Activated CD4-positive, alpha-beta memory T cell treated with anti-CD3 and anti-CD28 coated beads, Interleukin-2, amount 10 ng/mL, durations not matched to agents 7 days and 5 days (primary cell): ENCODE measurements at regions of chr1 and their contacts with region 1.

Region 1: DNA sequence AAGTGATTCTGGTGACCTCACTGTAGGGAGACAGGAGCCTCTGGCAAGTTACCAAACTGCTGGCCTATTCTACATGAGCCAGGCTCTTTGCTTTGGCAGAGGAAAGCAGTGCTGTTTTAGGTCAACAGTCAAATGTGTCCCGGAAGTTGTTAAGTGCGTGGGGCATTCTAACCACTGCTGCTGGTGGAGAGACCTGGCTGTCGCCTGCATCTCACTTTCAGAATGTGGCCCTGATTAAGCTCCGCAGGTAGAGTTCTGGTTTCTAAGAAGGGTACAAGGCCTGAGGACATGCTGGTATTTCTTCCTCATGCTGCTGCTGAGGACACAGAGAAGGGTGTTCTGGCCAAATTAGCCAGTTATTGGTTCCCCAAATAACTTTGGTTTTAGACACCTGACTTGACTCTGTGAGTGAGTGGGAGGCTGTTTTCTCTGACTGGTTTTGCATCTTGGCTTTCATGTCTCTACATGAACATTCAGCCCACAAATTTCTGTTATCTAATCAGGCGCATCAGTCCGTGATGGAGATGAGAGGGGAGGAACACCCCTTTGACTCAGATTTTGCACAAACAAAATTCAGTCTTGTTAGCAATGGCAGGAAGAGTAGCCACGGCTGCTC is 120.8 kb downstream of the LMO4 start:
- DNase-seq: peak; percentile 64
- H3K4me3 Mint-ChIP-seq: peak overlapping the region; percentile 62
- H3K27ac Mint-ChIP-seq: peak overlapping the region; percentile 87
- H3K4me1 Mint-ChIP-seq: peaks cover 25% of the 10 kb centered on the region
- H3K27me3 Mint-ChIP-seq: no peaks in the 10 kb centered on the region

Region 2: DNA sequence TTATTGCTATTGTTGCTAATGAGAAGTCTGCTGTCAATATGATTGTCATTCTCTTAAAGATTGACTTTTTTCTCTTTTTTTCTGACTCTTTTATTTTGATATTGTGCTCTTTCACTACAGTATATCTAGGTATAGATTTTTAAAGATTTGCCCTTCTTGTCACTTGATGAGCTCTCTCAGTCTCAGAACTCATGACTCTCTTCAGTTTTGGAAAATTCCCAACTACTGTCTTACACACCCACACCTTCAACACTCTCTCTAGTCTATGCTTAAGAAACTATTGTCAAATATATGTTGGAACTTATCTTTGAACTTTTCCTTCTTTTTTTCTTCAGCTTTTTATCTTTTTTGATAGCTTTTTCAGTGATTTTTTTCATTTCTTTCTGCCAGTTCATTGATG is 70.2 kb before region 1 on chr1:
- CTCF ChIA-PET with region 1: no interaction called
- POLR2A ChIA-PET with region 1: no interaction called
- DNase-seq: no peak
- H3K4me3 Mint-ChIP-seq: no peak overlapping the region
- H3K27ac Mint-ChIP-seq: no peak overlapping the region
- H3K4me1 Mint-ChIP-seq: no peaks in the 10 kb centered on the region
- H3K27me3 Mint-ChIP-seq: peaks cover 11% of the 10 kb centered on the region

Region 3: DNA sequence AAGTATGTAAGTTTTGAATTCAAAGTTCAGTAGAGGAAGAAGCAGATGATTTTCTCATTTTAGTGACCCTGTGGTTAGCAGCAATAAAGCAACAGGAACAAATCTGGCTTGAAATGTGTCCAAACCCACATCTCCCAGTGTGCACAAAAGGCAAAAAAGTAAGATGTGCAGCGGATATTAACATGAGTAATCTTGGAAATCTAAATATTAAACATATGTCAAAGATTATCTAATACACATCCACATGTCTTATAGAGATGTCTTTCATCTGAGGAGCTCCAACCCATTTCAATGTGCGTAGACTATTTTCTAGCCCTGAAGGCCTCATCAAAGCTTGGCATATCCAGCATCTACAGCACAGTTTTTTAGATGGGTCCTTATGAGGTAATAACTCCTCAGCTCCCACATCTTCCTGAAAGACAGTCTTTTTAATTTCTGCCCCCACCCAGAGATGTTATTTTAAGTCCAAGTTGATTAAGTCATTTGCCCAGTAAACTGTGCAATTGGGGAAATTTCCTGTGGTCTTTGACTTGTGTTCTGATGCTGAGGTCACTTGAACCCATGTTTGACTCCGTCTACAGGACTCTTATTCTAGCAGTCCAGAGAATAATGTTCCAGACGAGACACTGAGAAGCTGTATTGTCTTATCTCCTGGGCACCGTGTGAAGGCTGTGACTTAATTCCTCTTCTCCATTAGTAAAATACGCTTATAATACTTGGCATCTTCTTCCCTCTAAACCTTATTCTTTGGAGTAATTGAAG is 47.0 kb before region 1 on chr1:
- CTCF ChIA-PET with region 1: interaction called, 8 read pairs
- POLR2A ChIA-PET with region 1: interaction called, 10 read pairs
- DNase-seq: no peak
- H3K4me3 Mint-ChIP-seq: no peak overlapping the region
- H3K27ac Mint-ChIP-seq: no peak overlapping the region
- H3K4me1 Mint-ChIP-seq: peaks cover 31% of the 10 kb centered on the region
- H3K27me3 Mint-ChIP-seq: peaks cover 11% of the 10 kb centered on the region